ENCODE measurements at regions of chr14 and their contacts with region 1.

Region 1: GRCh38 chr14:55212634-55213033 is 21.2 kb upstream of the DLGAP5 start:
- DNase-seq: no peak
- ATAC-seq: no peak

Region 2: GRCh38 chr14:55285048-55285652 is 72.5 kb after region 1 on chr14:
- intact Hi-C with region 1: no loop called
- DNase-seq: no peak
- ATAC-seq: no peak

Region 3: GRCh38 chr14:55427409-55427808 is 214.8 kb after region 1 on chr14:
- intact Hi-C with region 1: loop called (anchors 10 kb)
- DNase-seq: no peak
- ATAC-seq: no peak

Measured in Right ventricle myocardium superior (tissue), 1 donor.